IMR-90 (cell line): ENCODE measurements at regions of chr4 and their contacts with region 1.

Region 1: GRCh38 chr4:147768113-147768512 is 36.2 kb downstream of the ARHGAP10 start:
- DNase-seq: peak; percentile 87
- ATAC-seq: peak; percentile 72
- H3K4me3 ChIP-seq: no peak overlapping the region
- H3K27ac ChIP-seq: peak overlapping the region; percentile 10; the same call in 1 of the 2 replicates
- H3K4me1 ChIP-seq: peaks cover 16% of the 10 kb centered on the region
- H3K27me3 ChIP-seq: no peaks in the 10 kb centered on the region
- CTCF ChIP-seq: no peak
- POLR2A ChIP-seq: no peak
- RAD21 ChIP-seq: 0 out of 2 replicates have a peak, but pooled peaks have one; percentile 14

Region 2: DNA sequence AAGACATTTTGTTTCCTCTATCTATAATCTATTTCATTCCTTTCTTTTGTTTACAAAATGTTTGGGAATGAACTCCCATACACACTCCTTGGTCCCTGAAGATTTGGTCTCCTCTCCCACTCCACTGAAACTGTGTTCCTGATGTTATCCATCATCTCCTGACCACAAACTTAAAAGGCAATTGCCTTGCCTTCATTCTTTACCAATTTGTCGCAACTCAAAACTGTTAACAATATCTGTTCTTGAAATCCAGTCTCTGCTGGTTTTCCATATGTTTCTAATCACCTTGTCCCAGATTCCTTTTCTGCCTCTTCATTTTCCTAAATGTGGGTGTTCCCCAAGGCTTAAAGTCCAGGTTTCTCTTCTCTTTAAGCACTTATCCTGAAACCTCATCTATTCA is 560.2 kb before region 1 on chr4:
- CTCF ChIA-PET with region 1: no interaction called
- POLR2A ChIA-PET with region 1: no interaction called
- dilution Hi-C with region 1: no loop called
- in situ Hi-C with region 1: no loop called
- intact Hi-C with region 1: no loop called
- DNase-seq: peak; percentile 19
- ATAC-seq: no peak
- H3K4me3 ChIP-seq: no peak overlapping the region
- H3K27ac ChIP-seq: no peak overlapping the region
- H3K4me1 ChIP-seq: no peaks in the 10 kb centered on the region
- H3K27me3 ChIP-seq: no peaks in the 10 kb centered on the region
- CTCF ChIP-seq: no peak
- POLR2A ChIP-seq: no peak
- RAD21 ChIP-seq: no peak

Region 3: GRCh38 chr4:147843162-147843561 is 75.0 kb after region 1 on chr4:
- CTCF ChIA-PET with region 1: no interaction called
- POLR2A ChIA-PET with region 1: no interaction called
- dilution Hi-C with region 1: no loop called
- in situ Hi-C with region 1: no loop called
- intact Hi-C with region 1: loop called (anchors 5 kb)
- DNase-seq: no peak
- ATAC-seq: no peak
- H3K4me3 ChIP-seq: no peak overlapping the region
- H3K27ac ChIP-seq: no peak overlapping the region
- H3K4me1 ChIP-seq: peaks cover 18% of the 10 kb centered on the region
- H3K27me3 ChIP-seq: no peaks in the 10 kb centered on the region
- CTCF ChIP-seq: no peak
- POLR2A ChIP-seq: no peak
- RAD21 ChIP-seq: no peak